B cell (primary cell): ENCODE measurements at regions of chr1 and their contacts with region 1.

Region 1: GRCh38 chr1:36223993-36224536 is at the start of gene THRAP3:
- DNase-seq: peak; percentile 100
- ATAC-seq: peak; percentile 88
- H3K4me3 ChIP-seq: peak within 1 kb of the TSS; percentile 77 to 98 (median 91)
- H3K4me3 Mint-ChIP-seq: peak within 1 kb of the TSS; percentile 98
- H3K27ac ChIP-seq: peak within 1 kb of the TSS; percentile 95 to 100
- H3K27ac Mint-ChIP-seq: peak within 1 kb of the TSS; percentile 100
- H3K4me1 ChIP-seq: peaks cover 22 to 43% of the 10 kb centered on the region in 2 donors
- H3K4me1 Mint-ChIP-seq: peaks cover 34% of the 10 kb centered on the region
- H3K27me3 ChIP-seq: no peaks in the 10 kb centered on the region
- H3K27me3 Mint-ChIP-seq: no peaks in the 10 kb centered on the region
- CTCF ChIP-seq: no peak
- total RNA-seq, gene THRAP3: 153 and 159 TPM in 2 replicates

Region 2: GRCh38 chr1:36088575-36089443 is 135.3 kb before region 1 on chr1 and contains the start of gene ADPRS:
- CTCF ChIA-PET with region 1: no interaction called
- POLR2A ChIA-PET with region 1: interaction called, 3 read pairs
- intact Hi-C with region 1: loop called (anchors 1 kb)
- DNase-seq: peak; percentile 95
- ATAC-seq: peak; percentile 88
- H3K4me3 ChIP-seq: peak within 1 kb of the TSS; percentile 79 to 98 (median 84)
- H3K4me3 Mint-ChIP-seq: peak within 1 kb of the TSS; percentile 97
- H3K27ac ChIP-seq: peak within 1 kb of the TSS; percentile 78 to 92
- H3K27ac Mint-ChIP-seq: peak within 1 kb of the TSS; percentile 94
- H3K4me1 ChIP-seq: peaks cover 22 to 28% of the 10 kb centered on the region in 2 donors
- H3K4me1 Mint-ChIP-seq: peaks cover 22% of the 10 kb centered on the region
- H3K27me3 ChIP-seq: peaks cover 0 to 18% (median 9%) of the 10 kb centered on the region in 4 experiments
- H3K27me3 Mint-ChIP-seq: peaks cover 16% of the 10 kb centered on the region
- CTCF ChIP-seq: peak; percentile 97
- total RNA-seq, gene ADPRS: 20.9 and 24.0 TPM in 2 replicates

Region 3: GRCh38 chr1:36168514-36168913 is 55.6 kb before region 1 on chr1:
- CTCF ChIA-PET with region 1: no interaction called
- POLR2A ChIA-PET with region 1: no interaction called
- intact Hi-C with region 1: no loop called
- DNase-seq: no peak
- ATAC-seq: no peak
- H3K4me3 ChIP-seq: no peak overlapping the region
- H3K4me3 Mint-ChIP-seq: no peak overlapping the region
- H3K27ac ChIP-seq: no peak overlapping the region
- H3K27ac Mint-ChIP-seq: peak overlapping the region; percentile 10
- H3K4me1 ChIP-seq: peaks cover 0 to 9% of the 10 kb centered on the region in 2 donors
- H3K4me1 Mint-ChIP-seq: peaks cover 17% of the 10 kb centered on the region
- H3K27me3 ChIP-seq: no peaks in the 10 kb centered on the region
- H3K27me3 Mint-ChIP-seq: no peaks in the 10 kb centered on the region
- CTCF ChIP-seq: no peak

Region 4: DNA sequence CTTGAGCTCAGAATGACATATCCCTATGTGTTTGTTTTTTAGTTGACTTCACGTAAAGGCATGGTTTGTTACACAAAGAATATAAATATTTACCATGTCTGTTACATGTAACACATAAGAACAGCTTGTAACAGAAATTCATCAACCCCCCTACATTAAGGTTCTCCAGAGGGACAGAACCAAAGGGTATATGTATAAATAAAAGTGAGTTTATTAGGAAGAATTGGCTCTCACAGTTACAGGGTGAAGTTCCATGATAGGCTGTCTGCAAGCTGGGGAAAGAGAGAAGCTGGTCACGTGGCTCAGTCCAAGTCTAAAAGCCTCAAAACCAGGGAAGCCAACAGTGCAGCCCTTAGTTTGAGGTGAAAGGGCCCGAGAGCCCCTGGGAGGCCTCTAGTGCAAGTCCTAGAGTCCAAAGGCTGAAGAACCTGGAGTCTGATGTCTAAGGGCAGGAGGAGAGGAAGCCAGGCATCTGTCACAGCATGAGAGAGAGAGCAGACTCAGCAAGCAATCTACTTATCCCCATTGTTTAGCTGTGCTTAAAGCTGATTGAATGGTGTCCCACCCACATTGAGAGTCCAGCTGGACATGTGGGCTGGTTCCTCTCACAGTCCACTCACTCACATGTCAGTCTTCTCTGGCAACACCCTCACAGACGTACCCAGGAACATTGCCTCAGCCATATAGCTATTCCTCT is 16.0 kb after region 1 on chr1:
- CTCF ChIA-PET with region 1: interaction called, 13 read pairs
- POLR2A ChIA-PET with region 1: interaction called, 11 read pairs
- intact Hi-C with region 1: no loop called
- DNase-seq: no peak
- ATAC-seq: no peak
- H3K4me3 ChIP-seq: no peak overlapping the region
- H3K4me3 Mint-ChIP-seq: no peak overlapping the region
- H3K27ac ChIP-seq: peak overlapping the region in 1 of 2 donors; percentile 9
- H3K27ac Mint-ChIP-seq: no peak overlapping the region
- H3K4me1 ChIP-seq: peaks cover 19 to 21% of the 10 kb centered on the region in 2 donors
- H3K4me1 Mint-ChIP-seq: peaks cover 43% of the 10 kb centered on the region
- H3K27me3 ChIP-seq: no peaks in the 10 kb centered on the region
- H3K27me3 Mint-ChIP-seq: no peaks in the 10 kb centered on the region
- CTCF ChIP-seq: no peak